OCI-LY7 (cell line): ENCODE measurements at regions of chr2 and their contacts with region 1.

Region 1: GRCh38 chr2:112584134-112584890 is at the start of gene CHCHD5:
- DNase-seq: peak; percentile 95
- H3K4me3 ChIP-seq: peak within 1 kb of the TSS; percentile 75
- H3K27ac ChIP-seq: peak within 1 kb of the TSS; percentile 76
- H3K4me1 ChIP-seq: peaks cover 27% of the 10 kb centered on the region
- CTCF ChIP-seq: no peak
- total RNA-seq, gene CHCHD5: 22.3 and 22.5 TPM in 2 replicates

Region 2: DNA sequence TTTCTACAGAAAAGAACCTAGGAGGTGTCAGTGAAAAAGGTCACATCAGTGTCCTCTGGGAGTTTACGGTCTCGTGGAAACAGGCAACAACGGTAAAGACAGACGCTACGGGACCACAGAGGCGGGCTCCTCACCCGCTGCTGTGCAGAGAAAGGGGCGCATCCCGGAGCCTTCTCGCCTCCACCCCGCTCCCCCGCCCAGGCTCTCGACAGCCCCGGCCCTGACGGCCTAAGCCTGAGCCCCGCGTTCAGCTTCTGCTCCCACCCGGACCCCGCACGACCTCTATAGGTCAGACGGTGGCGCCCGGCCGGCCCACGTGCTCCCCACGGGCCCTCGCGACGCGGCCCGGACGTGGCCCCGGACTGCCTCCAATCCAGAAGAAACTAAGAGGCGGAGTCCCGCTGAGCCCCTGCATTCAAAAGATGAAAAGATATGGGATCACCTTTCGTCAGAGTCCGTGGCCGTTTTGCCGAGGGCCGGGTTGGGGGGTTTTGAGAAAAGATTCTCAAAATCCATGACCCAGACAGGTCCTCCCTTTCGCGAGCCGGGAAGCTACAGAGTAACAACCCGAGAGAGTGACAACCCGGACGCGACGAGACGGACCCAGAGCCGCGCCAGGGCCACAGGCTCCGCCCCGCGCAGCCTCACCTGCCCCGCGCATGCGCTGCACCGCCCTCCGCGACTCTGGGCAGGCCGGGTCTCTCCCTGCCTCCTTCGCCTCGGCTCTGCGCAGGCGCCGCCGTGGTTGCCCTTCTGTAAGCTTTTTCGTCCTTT is 329.7 kb before region 1 on chr2 and contains the start of gene ZC3H8:
- CTCF ChIA-PET with region 1: no interaction called
- POLR2A ChIA-PET with region 1: no interaction called
- intact Hi-C with region 1: loop called (anchors 5 kb)
- DNase-seq: peak; percentile 93
- H3K4me3 ChIP-seq: peak within 1 kb of the TSS; percentile 83
- H3K27ac ChIP-seq: peak within 1 kb of the TSS; percentile 70
- H3K4me1 ChIP-seq: peaks cover 21% of the 10 kb centered on the region
- CTCF ChIP-seq: peak; percentile 45
- total RNA-seq, gene ZC3H8: 12.3 and 15.0 TPM in 2 replicates

Region 3: GRCh38 chr2:112542123-112542983 is 42.0 kb before region 1 on chr2 and contains the start of gene POLR1B:
- CTCF ChIA-PET with region 1: interaction called, 3 read pairs
- POLR2A ChIA-PET with region 1: interaction called, 3 read pairs
- intact Hi-C with region 1: loop called (anchors 5 kb)
- DNase-seq: peak; percentile 85
- H3K4me3 ChIP-seq: peak within 1 kb of the TSS; percentile 91
- H3K27ac ChIP-seq: peak within 1 kb of the TSS; percentile 83
- H3K4me1 ChIP-seq: peaks cover 23% of the 10 kb centered on the region
- CTCF ChIP-seq: no peak
- total RNA-seq, gene POLR1B: 28.0 and 30.5 TPM in 2 replicates